MCF 10A (cell line): ENCODE measurements at regions of chr3 and their contacts with region 1.

Region 1: DNA sequence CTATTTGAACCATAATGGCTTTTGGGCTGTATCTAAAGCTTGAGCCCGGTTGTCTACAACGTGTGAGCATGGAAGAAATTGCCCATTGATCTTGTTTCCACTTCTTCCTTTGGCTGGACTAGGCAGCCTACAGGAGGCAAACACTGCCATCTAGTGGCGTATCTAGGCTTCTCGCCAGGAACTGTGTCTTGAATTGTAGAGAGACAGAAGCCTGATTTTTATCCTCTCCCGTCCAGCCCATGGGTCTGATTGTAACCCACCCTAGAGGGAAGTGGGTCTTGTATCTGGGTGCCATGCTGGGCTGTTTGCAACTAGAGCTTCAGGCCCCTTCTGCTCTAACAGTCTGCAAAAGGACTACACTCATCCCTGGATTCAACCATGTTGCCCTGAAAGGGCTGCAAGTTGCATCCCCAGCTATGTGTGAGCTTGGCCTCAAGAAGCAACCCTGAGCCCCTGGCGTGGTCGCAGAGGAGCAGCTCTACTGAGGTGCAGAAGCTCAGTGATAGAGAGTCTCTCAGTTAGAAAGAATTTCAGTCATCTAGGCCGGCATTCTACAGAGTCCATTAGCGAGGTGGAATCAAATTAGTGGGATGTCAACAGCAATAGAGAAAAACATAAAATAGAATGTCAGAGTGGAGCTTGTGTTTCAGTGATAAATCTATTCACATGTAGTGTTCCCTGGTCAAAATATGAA is 170.2 kb upstream of the UMPS start:
- DNase-seq: peak; percentile 84
- H3K4me3 Mint-ChIP-seq: no peak overlapping the region
- H3K27ac Mint-ChIP-seq: no peak overlapping the region
- H3K4me1 Mint-ChIP-seq: peaks cover 28% of the 10 kb centered on the region
- H3K27me3 Mint-ChIP-seq: peaks cover 41% of the 10 kb centered on the region
- CTCF ChIP-seq: peak; percentile 67

Region 2: DNA sequence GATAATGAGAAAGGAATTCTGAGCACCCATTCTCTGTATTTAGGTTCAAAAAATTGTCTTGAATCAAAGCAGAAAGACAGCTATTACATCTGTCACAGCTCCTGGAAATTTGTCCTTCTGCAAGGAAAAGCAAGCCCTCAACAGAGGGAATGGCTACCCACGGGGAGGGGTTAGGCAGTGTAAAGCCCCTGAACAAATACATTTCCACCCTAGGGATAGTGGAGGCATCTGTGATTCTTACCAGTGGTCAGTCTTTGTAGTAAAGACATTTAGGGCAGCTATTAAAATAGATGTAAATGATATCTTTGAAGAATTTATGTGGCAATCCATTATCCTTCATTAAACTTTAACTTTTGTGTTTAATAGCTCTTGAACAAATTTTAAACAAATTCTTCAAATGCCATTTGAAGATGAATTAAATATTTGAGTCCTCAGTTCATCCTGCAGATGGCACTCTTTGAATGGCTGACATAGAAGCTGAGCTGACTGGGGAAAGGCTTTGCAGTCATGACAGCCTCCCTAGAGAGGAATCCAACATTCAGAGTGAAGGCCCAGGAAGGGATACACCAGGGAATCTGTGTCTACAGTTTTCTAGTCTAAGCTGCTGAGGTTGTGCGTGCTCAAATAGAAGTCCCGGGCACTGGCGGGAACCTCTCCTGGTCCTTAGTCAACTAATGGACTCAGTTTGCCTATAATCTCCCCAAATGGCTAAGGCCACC is 208.4 kb before region 1 on chr3:
- CTCF ChIA-PET with region 1: interaction called, 19 read pairs
- POLR2A ChIA-PET with region 1: no interaction called
- intact Hi-C with region 1: loop called (anchors 1 kb)
- DNase-seq: peak; percentile 64
- H3K4me3 Mint-ChIP-seq: no peak overlapping the region
- H3K27ac Mint-ChIP-seq: no peak overlapping the region
- H3K4me1 Mint-ChIP-seq: no peaks in the 10 kb centered on the region
- H3K27me3 Mint-ChIP-seq: peaks cover 81% of the 10 kb centered on the region
- CTCF ChIP-seq: peak; percentile 65

Region 3: DNA sequence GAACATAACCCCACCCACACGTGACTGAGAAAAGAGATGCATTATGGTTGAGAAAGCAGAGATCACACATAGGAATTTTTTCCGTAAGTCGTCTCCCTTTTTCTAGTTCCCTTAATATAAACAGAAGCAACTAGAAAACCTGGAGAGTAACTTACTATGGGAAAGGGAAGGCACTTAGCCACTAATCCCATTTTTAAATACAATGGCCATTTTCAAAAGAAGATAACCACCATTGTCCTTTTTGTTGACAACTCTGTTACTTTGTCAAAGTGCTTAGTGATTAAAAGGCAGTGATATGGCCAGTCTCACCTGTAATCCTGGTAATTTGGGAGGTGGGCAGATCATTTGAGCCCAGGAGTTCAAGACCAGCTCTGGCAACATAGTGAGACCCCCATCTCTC is 14.1 kb before region 1 on chr3:
- CTCF ChIA-PET with region 1: interaction called, 43 read pairs
- POLR2A ChIA-PET with region 1: no interaction called
- intact Hi-C with region 1: no loop called
- DNase-seq: no peak
- H3K4me3 Mint-ChIP-seq: no peak overlapping the region
- H3K27ac Mint-ChIP-seq: no peak overlapping the region
- H3K4me1 Mint-ChIP-seq: no peaks in the 10 kb centered on the region
- H3K27me3 Mint-ChIP-seq: peaks cover 73% of the 10 kb centered on the region
- CTCF ChIP-seq: no peak

Region 4: DNA sequence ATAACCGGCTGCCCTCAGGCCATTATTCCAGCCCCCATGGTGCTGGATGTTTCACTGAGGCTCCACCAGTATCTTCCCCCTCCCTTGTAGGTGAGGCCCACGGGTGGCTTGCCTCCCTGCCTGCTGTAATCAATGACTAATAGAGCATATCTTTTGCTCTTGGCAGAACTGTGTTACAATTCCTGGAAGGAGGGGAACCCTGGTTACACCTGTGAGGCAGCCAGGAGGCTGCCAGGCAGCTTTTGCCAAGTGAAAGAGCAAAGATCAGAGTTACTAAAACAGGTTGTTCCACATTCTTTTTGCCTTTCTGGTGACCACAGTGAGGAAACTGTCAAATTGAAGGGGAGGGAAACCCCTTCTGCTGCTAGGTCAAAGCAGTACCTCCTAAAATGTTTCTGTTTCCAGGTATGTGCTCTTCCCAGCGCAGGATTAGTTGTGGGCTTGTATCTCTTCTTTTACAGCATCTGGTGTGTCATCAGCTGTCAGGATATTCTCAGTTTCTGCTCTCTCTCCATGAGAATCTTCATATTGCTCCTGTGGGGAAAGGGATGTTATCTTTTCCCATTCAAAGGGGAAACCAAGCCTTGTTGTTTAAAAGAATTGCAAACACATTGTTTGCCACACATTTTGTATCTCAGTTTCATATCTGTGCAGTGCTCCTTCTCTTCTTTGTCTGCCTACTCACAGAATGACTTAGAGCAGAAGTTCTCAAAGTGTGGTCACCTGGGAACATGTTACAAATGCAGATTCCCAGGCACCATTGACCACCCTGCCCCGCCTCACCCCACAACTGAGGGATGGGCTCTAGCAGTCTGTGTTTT is 32.8 kb after region 1 on chr3:
- CTCF ChIA-PET with region 1: interaction called, 12 read pairs
- POLR2A ChIA-PET with region 1: no interaction called
- intact Hi-C with region 1: no loop called
- DNase-seq: peak; percentile 27
- H3K4me3 Mint-ChIP-seq: no peak overlapping the region
- H3K27ac Mint-ChIP-seq: no peak overlapping the region
- H3K4me1 Mint-ChIP-seq: no peaks in the 10 kb centered on the region
- H3K27me3 Mint-ChIP-seq: peaks cover 12% of the 10 kb centered on the region
- CTCF ChIP-seq: no peak

Region 5: DNA sequence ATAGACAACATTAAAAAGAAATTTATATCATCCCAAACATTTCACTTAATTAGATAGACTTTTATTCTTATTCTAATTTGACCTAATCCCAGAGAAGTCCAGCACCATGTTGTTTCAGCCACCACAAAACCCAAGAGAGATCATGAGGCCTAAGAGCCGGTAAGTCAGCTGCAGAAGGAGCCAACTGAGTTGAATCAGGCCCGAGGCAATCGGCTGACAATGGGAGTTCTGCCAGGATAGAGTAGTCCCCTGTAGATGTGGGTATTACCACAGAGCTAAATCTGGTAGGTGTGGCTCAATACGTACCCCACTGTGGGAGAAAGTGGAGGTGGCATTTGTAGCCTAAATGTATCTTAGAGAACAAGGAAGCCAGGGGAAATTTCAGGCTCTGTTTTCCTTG is 120.5 kb after region 1 on chr3:
- CTCF ChIA-PET with region 1: interaction called, 372 read pairs
- POLR2A ChIA-PET with region 1: no interaction called
- intact Hi-C with region 1: no loop called
- DNase-seq: no peak
- H3K4me3 Mint-ChIP-seq: no peak overlapping the region
- H3K27ac Mint-ChIP-seq: no peak overlapping the region
- H3K4me1 Mint-ChIP-seq: peaks cover 2% of the 10 kb centered on the region
- H3K27me3 Mint-ChIP-seq: no peaks in the 10 kb centered on the region
- CTCF ChIP-seq: no peak

Region 6: DNA sequence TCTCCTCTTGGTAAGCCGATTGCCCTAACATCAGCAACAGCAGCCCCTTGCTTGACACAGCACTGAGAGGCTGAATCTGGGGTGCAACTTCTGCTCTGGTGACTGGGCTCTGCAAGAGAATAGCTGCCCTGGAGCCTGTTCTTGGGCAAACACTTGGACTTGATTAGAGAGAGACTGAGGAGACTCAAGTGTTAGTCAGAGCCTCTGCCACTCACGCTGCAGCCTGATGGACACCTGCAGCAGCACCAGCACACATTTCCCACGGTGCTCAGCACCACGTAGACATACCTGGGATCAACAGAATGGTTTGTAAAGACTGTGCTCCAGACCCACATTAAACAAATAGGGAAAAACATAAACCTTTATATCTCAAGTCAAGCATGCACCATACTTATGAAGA is 134.5 kb after region 1 on chr3:
- CTCF ChIA-PET with region 1: interaction called, 372 read pairs
- POLR2A ChIA-PET with region 1: interaction called, 10 read pairs
- intact Hi-C with region 1: no loop called
- DNase-seq: no peak
- H3K4me3 Mint-ChIP-seq: no peak overlapping the region
- H3K27ac Mint-ChIP-seq: no peak overlapping the region
- H3K4me1 Mint-ChIP-seq: no peaks in the 10 kb centered on the region
- H3K27me3 Mint-ChIP-seq: no peaks in the 10 kb centered on the region
- CTCF ChIP-seq: no peak